Heart right ventricle (tissue), 16 donors: ENCODE measurements at regions of chr3 and their contacts with region 1.

Region 1: DNA sequence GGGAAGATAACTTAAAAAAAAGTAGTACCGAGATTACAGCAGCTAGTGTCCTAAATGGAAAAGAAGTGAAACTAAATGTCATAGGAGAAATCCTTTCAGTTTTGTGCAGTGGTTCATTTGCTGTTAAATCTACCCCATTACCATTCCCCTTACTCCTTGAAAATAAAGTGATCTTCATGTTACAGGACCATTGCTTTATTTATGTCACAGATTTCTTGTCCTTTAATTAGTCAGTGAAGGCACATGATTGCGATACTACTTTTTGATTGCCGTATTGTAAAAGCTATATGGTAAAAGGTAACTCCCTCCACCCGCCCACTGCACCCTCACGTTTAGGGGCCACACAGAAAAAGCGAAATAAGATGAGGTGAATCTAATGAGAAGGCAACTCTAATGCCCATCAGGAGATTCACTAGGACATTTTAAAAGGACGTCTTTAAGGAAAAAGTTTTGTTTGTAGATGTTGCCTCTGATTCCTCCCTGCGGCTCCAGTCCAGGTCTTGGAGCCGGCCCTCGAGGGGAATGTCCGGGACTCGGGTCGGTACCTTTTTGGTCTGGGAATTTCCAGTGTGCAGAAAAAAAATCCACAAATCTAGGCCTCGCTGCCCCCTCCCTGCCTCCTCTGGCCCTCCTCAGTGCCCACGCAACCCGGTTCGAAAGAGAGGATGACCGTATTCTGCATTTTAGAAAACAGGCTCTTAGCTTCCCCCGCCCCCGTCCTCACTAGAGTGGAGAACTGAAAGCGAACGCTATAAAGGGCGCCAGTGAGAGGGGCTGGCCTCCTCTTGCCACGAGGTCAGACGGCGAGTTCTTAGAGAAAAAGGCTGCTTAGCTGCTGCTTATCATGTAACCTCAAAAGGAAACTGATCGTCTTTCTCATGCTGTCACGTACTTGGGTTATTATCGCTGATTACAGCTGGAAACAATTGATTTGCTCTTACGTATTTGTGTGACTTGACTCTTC is 21.8 kb upstream of the NFKBIZ start:
- DNase-seq: peak; percentile 55 to 83
- ATAC-seq: peak; percentile 83 to 93 (median 88)
- H3K4me3 ChIP-seq: peak overlapping the region; percentile 38 to 72 (median 57)
- H3K27ac ChIP-seq: peak overlapping the region; percentile 72 to 92 (median 85)
- H3K4me1 ChIP-seq: peaks cover 5 to 57% (median 34%) of the 10 kb centered on the region in 9 donors
- H3K27me3 ChIP-seq: no peaks in the 10 kb centered on the region
- CTCF ChIP-seq: no peak

Region 2: GRCh38 chr3:101849051-101849720 is 21.7 kb after region 1 on chr3 and contains the start of gene NFKBIZ:
- intact Hi-C with region 1: loop called in 4 of 10 experiments (anchors 1 to 2 kb)
- DNase-seq: peak; percentile 97 to 98
- ATAC-seq: peak; percentile 95 to 99 (median 96)
- H3K4me3 ChIP-seq: peak within 1 kb of the TSS; percentile 58 to 97 (median 90)
- H3K27ac ChIP-seq: peak within 1 kb of the TSS; percentile 97 to 100 (median 99)
- H3K4me1 ChIP-seq: peaks cover 0 to 49% (median 14%) of the 10 kb centered on the region in 9 donors
- H3K27me3 ChIP-seq: no peaks in the 10 kb centered on the region
- CTCF ChIP-seq: peak in 1 of 9 donors; percentile 9
- total RNA-seq, gene NFKBIZ: 7.7 to 26.2 (median 12.8) TPM

Region 3: GRCh38 chr3:101861212-101861788 is 33.8 kb after region 1 on chr3:
- intact Hi-C with region 1: no loop called
- DNase-seq: no peak
- ATAC-seq: no peak
- H3K4me3 ChIP-seq: no peak overlapping the region
- H3K27ac ChIP-seq: no peak overlapping the region
- H3K4me1 ChIP-seq: peaks cover 0 to 12% (median 3%) of the 10 kb centered on the region in 9 donors
- H3K27me3 ChIP-seq: no peaks in the 10 kb centered on the region
- CTCF ChIP-seq: no peak

Region 4: DNA sequence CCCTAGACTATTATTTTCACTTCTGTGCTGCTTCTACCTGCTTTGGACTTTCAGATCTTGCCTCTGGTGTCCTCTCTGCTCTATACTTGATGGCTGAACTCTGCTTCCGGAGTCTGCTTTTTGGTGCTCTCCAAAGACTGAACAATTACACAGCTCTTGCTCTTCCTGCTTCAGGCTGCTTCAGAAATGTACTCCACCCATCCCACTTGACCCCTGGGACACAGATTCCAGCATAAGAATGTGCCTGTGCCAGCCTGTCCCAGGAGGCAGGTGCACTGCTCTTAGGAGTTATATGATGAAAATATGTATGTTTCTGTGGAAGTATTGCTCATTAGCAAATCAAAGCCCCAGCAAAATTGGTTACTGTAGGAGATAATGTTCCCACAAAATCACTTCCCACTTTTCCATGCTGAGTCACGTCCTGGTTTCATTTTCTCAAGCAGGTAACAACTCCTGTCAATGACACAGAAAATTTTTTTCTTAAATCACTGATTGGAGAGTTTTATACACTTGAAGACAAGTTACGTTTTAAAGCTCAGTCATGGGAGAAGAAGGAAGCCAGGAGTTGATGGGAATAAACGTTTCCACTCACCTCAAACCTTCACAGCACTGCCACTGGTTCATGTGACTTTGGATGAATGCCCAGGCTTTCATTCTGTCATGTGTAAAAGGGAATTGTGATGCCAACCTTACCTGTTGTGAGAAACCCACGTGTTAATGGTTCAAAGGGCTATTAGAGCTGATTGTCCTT is 367.9 kb after region 1 on chr3:
- intact Hi-C with region 1: loop called in 1 of 10 experiments (anchors 10 kb)
- DNase-seq: no peak
- ATAC-seq: peak in 5 of 8 donors; percentile 39 to 80 (median 54)
- H3K4me3 ChIP-seq: no peak overlapping the region
- H3K27ac ChIP-seq: peak overlapping the region in 6 of 10 donors; percentile 2 to 48 (median 30)
- H3K4me1 ChIP-seq: peaks cover 0 to 18% (median 4%) of the 10 kb centered on the region in 9 donors
- H3K27me3 ChIP-seq: no peaks in the 10 kb centered on the region
- CTCF ChIP-seq: no peak